ENCODE measurements at regions of chr17 and their contacts with region 1.

Region 1: DNA sequence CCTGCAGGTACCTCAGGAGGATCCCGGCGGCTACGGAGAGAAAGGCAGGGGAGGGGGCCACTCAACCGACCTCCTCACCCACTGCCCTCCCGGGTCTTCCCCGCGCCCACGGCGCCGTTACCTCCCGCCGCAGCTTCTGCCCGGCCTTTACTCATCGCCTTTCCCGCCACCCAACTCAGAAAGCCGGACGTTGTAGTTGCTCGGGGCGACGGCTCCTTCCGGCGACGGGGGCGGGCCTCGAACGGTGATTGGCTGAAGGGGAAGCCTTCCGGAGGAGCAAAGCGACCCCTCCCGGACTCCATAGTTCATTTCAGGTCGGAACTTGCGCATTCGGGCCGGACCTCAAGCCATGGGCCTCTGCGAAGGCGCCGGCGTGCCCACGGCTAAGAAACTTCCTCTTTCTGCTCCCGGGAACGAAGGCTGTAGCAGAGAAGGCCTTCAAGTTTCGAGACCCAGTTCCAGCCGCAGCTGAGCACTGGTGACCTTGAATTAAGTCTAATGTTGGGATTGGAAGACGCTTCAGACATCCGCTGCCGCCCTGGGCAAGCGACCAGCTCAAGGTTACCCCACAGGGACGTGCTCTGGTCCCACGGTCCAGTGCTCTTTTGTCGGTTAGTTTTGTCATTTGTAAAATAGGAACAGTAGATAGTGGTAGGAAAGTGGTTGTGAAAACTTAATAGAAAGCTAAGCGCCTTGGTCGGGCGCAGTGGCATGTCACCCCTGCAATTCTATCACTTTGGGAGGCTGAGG is at the start of gene PSMC3IP:
- DNase-seq: peak; percentile 96
- H3K4me3 Mint-ChIP-seq: peak within 1 kb of the TSS; percentile 97
- H3K27ac Mint-ChIP-seq: peak within 1 kb of the TSS; percentile 94
- H3K4me1 Mint-ChIP-seq: peaks cover 38% of the 10 kb centered on the region
- H3K27me3 Mint-ChIP-seq: no peaks in the 10 kb centered on the region
- total RNA-seq, gene PSMC3IP: 17.4 to 18.5 TPM

Region 2: DNA sequence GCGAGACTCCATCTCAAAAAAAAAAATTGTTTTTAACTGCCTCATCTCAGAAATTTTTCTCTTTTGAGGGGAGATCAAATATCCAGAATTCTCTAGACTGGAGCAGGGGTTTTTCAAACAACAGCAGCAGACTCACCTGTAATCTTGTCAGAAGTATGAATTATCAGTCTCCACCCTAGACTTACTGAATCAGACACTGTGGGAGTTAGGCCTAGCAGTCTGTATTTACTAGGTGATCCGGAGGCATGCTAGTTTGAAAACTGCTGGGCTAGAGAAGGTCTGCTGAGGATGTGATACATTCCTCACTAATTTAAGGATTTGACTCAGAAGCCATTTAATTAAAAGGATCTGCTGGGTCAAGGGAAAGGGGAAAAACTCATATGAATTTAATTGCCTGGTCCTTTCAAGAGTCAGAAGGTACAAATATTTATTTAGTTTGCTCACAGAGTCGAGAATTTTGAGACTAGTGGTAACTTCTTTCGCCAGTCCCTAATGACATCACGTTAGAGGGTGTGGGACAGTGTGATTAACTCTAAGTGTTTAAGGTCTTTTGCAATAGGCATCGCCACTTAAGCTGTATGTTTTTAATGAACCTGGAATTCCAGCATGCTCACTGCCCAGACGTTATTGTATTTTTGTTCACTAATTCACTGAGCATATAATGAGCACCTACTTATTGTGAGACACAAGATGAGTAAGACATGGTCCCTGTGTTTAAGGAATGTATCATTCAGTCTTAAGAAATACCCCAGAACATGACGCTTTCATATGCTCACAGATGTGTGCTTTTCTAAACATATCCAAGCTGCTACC is 104.8 kb before region 1 on chr17:
- CTCF ChIA-PET with region 1: no interaction called
- POLR2A ChIA-PET with region 1: no interaction called
- DNase-seq: no peak
- H3K4me3 Mint-ChIP-seq: no peak overlapping the region
- H3K27ac Mint-ChIP-seq: no peak overlapping the region
- H3K4me1 Mint-ChIP-seq: peaks cover 15% of the 10 kb centered on the region
- H3K27me3 Mint-ChIP-seq: no peaks in the 10 kb centered on the region

Region 3: GRCh38 chr17:42493319-42493718 is 84.4 kb before region 1 on chr17:
- CTCF ChIA-PET with region 1: no interaction called
- POLR2A ChIA-PET with region 1: no interaction called
- DNase-seq: no peak
- H3K4me3 Mint-ChIP-seq: no peak overlapping the region
- H3K27ac Mint-ChIP-seq: no peak overlapping the region
- H3K4me1 Mint-ChIP-seq: peaks cover 19% of the 10 kb centered on the region
- H3K27me3 Mint-ChIP-seq: peaks cover 8% of the 10 kb centered on the region

Region 4: GRCh38 chr17:42554250-42555121 is 23.2 kb before region 1 on chr17:
- CTCF ChIA-PET with region 1: interaction called, 13 read pairs
- POLR2A ChIA-PET with region 1: no interaction called
- DNase-seq: peak; percentile 80
- H3K4me3 Mint-ChIP-seq: peak overlapping the region; percentile 87
- H3K27ac Mint-ChIP-seq: peak overlapping the region; percentile 91
- H3K4me1 Mint-ChIP-seq: peaks cover 28% of the 10 kb centered on the region
- H3K27me3 Mint-ChIP-seq: no peaks in the 10 kb centered on the region

Region 5: GRCh38 chr17:42566883-42567573 is 10.7 kb before region 1 on chr17 and contains the start of gene MLX:
- CTCF ChIA-PET with region 1: interaction called, 38 read pairs
- POLR2A ChIA-PET with region 1: interaction called, 3 read pairs
- DNase-seq: peak; percentile 91
- H3K4me3 Mint-ChIP-seq: peak within 1 kb of the TSS; percentile 92
- H3K27ac Mint-ChIP-seq: peak within 1 kb of the TSS; percentile 95
- H3K4me1 Mint-ChIP-seq: peaks cover 45% of the 10 kb centered on the region
- H3K27me3 Mint-ChIP-seq: no peaks in the 10 kb centered on the region
- total RNA-seq, gene MLX: 56.7 to 62.3 TPM

Region 6: DNA sequence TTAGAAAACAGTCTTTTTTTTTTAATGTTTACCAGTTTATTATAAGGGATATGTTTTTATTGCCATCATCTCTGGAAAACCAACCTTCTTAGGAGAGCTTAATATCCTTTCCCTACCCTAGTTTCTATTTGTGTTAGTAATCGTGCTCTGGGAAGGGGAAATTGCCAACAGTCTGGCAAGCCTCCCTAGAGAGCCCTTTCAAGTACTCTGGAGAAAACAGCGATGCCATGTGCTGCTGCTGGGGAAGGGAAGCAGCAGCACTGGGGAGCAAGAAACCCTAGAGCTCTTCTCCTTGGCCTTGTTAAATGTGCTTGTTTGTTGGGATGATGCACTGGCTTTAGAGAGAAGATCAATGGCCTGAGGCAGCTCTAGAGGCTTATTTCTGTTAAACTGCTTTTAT is 21.2 kb after region 1 on chr17:
- CTCF ChIA-PET with region 1: interaction called, 20 read pairs
- POLR2A ChIA-PET with region 1: no interaction called
- DNase-seq: no peak
- H3K4me3 Mint-ChIP-seq: no peak overlapping the region
- H3K27ac Mint-ChIP-seq: no peak overlapping the region
- H3K4me1 Mint-ChIP-seq: peaks cover 2% of the 10 kb centered on the region
- H3K27me3 Mint-ChIP-seq: no peaks in the 10 kb centered on the region

Region 7: GRCh38 chr17:42609182-42609813 is 31.6 kb after region 1 on chr17 and contains the starts of genes RETREG3 and TUBG1:
- CTCF ChIA-PET with region 1: interaction called, 20 read pairs
- POLR2A ChIA-PET with region 1: interaction called, 8 read pairs
- DNase-seq: peak; percentile 99
- H3K4me3 Mint-ChIP-seq: peak within 1 kb of the TSS; percentile 98
- H3K27ac Mint-ChIP-seq: peak within 1 kb of the TSS; percentile 95
- H3K4me1 Mint-ChIP-seq: peaks cover 40% of the 10 kb centered on the region
- H3K27me3 Mint-ChIP-seq: no peaks in the 10 kb centered on the region
- total RNA-seq, gene RETREG3: 60.2 to 65.9 TPM
- total RNA-seq, gene TUBG1: 61.6 TPM

Region 8: DNA sequence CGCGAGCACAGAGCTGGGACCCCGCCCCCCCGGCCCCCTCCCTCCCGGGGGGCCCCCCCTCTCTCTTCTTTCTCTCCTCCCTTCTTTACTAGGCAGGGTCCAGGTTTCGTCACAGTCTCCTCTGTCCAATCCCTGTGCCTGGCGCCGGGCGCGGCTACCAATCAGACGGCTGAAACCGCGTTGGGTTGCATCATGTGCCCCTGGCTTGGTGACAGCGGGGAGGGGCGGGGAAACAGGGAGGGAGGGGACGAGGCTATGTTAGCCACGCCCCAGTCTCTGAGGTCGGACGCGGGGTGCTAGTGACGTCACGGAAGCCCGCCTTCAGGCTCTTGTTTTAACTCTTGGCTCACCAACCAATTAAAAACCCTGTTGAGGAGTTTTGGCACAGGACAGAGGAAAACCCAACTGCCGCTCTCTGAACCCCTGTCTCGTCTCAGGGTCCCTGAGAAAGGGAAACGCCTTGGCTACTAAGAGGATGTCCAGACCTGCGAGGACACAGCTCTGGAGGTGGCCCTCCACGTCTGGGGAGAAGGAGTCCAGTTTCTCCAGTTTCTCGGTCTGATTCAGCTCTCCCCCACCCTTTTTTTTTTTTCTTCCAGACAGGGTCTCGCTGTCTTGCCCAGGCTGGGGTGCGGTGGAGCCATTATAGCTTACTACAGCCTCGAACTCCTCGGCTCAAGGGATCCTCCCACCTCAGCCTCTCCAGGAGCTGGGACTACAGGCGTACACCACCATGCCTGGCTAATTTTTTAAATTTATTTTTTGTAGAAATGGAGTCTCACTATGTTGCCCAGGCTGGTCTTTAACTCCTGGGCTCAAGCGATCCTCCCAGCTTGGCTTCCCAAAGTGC is 99.5 kb after region 1 on chr17:
- CTCF ChIA-PET with region 1: interaction called, 23 read pairs
- POLR2A ChIA-PET with region 1: interaction called, 5 read pairs
- DNase-seq: peak; percentile 99
- H3K4me3 Mint-ChIP-seq: peak overlapping the region; percentile 78
- H3K27ac Mint-ChIP-seq: peak overlapping the region; percentile 86
- H3K4me1 Mint-ChIP-seq: peaks cover 52% of the 10 kb centered on the region
- H3K27me3 Mint-ChIP-seq: peaks cover 49% of the 10 kb centered on the region

Region 9: DNA sequence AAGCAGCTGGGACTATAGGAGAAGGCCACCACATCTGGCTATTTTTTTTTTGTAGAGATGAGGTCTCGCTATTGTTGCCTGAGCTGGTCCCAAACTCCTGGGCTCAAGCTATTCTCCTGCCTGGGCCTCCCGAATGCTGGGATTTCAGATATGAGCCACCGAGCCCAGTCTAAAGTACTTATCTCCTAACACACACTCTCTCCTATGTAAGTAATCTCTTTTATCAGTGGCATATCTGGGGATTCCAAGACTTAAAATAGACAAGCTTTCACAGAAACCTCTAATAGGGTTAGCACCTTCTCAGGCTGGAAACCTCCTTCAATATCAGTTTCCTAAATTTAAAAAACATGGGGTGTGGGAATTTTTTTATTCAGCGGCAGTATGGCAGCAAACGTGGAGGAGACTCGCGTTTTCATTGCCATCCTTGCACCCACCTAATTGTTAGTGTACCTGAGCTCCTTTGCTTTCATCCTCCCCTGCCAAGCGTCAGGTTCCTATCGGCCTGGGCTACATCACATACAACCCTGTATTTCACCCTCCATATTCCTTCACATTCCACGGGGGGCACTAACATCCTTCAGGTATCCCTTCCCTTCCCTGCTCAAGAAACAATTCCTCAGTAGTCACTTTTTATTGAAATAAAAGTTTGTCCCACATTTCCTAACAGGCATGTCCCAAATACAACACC is 166.0 kb after region 1 on chr17:
- CTCF ChIA-PET with region 1: no interaction called
- POLR2A ChIA-PET with region 1: no interaction called
- DNase-seq: no peak
- H3K4me3 Mint-ChIP-seq: peak overlapping the region; percentile 92
- H3K27ac Mint-ChIP-seq: peak overlapping the region; percentile 90
- H3K4me1 Mint-ChIP-seq: peaks cover 21% of the 10 kb centered on the region
- H3K27me3 Mint-ChIP-seq: peaks cover 27% of the 10 kb centered on the region

Region 10: GRCh38 chr17:42804918-42805367 is 227.2 kb after region 1 on chr17:
- CTCF ChIA-PET with region 1: no interaction called
- POLR2A ChIA-PET with region 1: no interaction called
- DNase-seq: no peak
- H3K4me3 Mint-ChIP-seq: no peak overlapping the region
- H3K27ac Mint-ChIP-seq: no peak overlapping the region
- H3K4me1 Mint-ChIP-seq: no peaks in the 10 kb centered on the region
- H3K27me3 Mint-ChIP-seq: peaks cover 5% of the 10 kb centered on the region